Psoas muscle (tissue), 8 donors: ENCODE measurements at regions of chr2 and their contacts with region 1.

Region 1: GRCh38 chr2:16161768-16162490 is 221.6 kb downstream of the MYCN start:
- DNase-seq: no peak
- ATAC-seq: no peak
- H3K4me3 ChIP-seq: no peak overlapping the region
- H3K27ac ChIP-seq: no peak overlapping the region
- H3K4me1 ChIP-seq: no peaks in the 10 kb centered on the region
- H3K27me3 ChIP-seq: no peaks in the 10 kb centered on the region
- CTCF ChIP-seq: no peak

Region 2: GRCh38 chr2:16137080-16137755 is 24.7 kb before region 1 on chr2:
- intact Hi-C with region 1: loop called in 1 of 2 experiments (anchors 2 kb)
- DNase-seq: no peak
- ATAC-seq: no peak
- H3K4me3 ChIP-seq: no peak overlapping the region
- H3K27ac ChIP-seq: no peak overlapping the region
- H3K4me1 ChIP-seq: no peaks in the 10 kb centered on the region
- H3K27me3 ChIP-seq: no peaks in the 10 kb centered on the region
- CTCF ChIP-seq: no peak